ENCODE measurements at regions of chr13 and their contacts with region 1.

Region 1: DNA sequence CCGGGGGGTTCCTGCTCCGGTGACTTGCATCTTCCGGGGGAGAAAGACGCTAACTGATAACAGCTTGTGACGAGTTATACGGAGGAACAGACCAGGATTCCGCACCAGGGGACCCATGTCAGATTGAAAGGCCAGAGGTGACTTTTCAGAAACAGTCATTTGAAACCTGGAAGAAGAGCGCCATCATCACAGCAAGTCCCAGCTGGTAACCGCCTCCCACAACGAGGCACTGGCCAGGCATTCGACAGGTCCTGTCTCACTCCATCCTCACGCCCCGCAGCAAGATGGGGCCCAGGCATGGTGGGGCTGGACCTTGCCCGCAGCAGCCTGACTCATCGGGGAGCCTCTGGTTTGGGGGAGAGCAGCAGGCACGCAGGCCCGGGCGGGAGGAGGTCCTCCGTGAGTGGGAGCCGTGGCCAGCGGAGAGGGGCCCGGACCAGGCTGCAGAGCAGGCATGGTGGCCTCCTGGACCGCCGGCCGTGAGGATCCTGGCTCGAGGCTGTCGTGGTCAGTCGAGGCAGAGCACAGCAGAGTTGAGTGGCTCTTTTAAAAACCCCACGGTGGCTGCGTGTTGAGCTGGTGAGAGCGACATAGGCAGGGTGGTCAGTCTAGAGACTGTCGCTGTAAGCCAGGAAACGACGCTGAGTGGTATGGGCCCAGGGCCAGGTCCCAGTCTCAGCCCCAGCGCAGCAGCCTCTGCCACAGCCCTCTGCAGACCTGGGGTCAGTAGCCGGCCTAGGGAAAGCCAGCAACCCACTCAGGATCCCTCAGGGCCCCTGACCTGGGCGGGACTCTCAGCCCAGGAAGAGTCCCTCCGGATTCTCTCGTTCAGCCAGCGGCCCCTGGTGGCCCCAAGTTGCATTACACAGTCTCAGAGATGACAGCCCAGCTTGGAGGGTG is 94.9 kb upstream of the MCF2L start:
- DNase-seq: peak; percentile 82 to 92
- ATAC-seq: peak; percentile 88
- H3K4me3 ChIP-seq: no peak overlapping the region
- H3K27ac ChIP-seq: no peak overlapping the region
- H3K4me1 ChIP-seq: no peaks in the 10 kb centered on the region
- H3K27me3 ChIP-seq: no peaks in the 10 kb centered on the region

Region 2: DNA sequence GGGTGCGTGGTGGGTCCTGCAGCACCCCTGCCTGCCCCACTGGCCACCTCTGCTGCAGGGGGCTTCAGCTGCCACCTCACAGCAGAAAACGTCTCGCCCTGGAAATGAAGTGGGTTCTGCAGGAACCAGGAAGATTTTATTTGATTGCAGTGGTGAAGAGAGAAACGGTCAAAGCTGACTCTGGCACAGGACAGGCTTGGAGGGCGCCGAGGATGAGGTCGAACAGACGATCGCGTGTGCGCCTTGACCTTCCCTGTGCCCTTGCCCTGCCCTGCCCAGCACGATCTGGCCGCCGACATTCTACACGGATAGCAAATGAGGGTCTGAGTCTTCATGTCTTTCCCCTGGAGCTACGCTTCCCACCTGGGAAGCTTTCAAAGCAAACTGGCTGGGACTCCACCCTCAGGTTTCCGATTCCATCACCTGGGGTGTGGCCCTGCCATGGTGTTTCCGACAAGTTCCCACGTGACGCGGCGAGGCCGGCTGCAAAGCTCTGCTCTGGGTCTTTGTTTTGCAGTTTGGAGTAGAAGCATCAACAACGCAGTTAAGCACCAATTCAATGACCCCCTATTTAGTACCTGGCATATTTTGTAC is 235.8 kb before region 1 on chr13:
- intact Hi-C with region 1: loop called (anchors 1 to 10 kb)
- DNase-seq: peak in 1 of 2 donors; percentile 68
- ATAC-seq: no peak
- H3K4me3 ChIP-seq: no peak overlapping the region
- H3K27ac ChIP-seq: no peak overlapping the region
- H3K4me1 ChIP-seq: no peaks in the 10 kb centered on the region
- H3K27me3 ChIP-seq: no peaks in the 10 kb centered on the region

Region 3: DNA sequence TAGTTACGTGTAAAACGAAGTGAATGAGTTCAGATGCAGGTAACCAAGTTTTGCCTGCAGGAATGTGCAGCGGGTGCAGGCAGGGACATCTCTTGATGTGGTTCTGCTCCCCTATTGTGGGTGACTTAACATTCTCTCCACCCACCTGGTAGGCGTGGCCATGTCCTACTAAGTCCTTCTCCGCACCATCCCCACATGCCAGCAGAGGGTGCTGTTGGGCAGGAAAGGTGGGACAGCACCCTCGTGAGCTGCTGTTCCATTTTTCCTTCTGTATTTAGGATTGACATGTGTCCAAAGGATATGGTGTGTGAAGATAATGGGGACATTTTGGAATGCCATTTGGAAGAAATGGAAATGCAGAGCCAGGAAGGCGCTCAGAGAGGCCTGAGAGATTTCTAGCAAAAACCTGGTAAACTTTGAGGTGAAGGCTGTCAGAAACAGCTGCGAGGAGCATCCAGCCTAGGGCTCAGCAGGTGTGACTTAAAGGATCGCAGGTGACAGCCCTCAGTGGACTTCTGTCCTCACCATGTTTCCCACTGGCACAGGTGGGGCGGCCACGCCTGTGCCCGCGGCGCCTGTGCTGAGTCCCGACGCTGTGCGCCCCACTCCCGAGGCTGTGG is 68.7 kb after region 1 on chr13:
- intact Hi-C with region 1: no loop called
- DNase-seq: peak; percentile 97 to 98
- ATAC-seq: peak; percentile 93
- H3K4me3 ChIP-seq: peak overlapping the region; percentile 27 to 41
- H3K27ac ChIP-seq: no peak overlapping the region
- H3K4me1 ChIP-seq: no peaks in the 10 kb centered on the region
- H3K27me3 ChIP-seq: no peaks in the 10 kb centered on the region

Measured in aorta (tissue), 5 donors.